Activated T-helper 2 cell treated with anti-CD3 and anti-CD28 coated beads, Interferon-gamma antibody, Interleukin-2, Interleukin-4, amounts not matched to agents 10 μg/mL and 5 μg/mL and 100 μg/mL, durations not matched to agents 14 hours and 24 hours and 36 hours (primary cell): ENCODE measurements at regions of chr11 and their contacts with region 1.

Region 1: DNA sequence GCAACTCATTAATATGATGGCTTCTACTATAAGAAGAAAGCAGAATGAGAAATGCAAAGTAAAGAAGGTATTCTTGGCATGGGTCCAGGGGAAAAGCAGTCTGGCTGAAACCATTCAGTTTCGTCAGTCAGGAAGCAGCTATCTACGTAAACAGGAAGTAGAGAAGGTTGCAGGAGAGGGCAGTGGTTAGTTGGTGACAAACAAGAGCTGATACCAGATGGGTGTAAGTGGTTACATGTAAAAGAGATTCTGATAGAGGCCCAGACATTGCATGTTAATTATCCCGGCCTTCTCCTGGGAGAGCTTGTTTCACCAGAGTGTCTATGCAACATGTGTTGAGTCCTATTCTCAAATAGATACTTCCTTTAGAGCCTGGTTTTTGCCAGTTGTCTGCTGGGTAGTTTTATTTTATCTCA is 58.4 kb upstream of the PSMA1 start:
- DNase-seq: peak; percentile 71
- H3K4me3 Mint-ChIP-seq: peak overlapping the region; percentile 42
- H3K27ac Mint-ChIP-seq: peak overlapping the region; percentile 87
- H3K4me1 Mint-ChIP-seq: peaks cover 45% of the 10 kb centered on the region
- H3K27me3 Mint-ChIP-seq: no peaks in the 10 kb centered on the region

Region 2: GRCh38 chr11:14519917-14520746 is 58.4 kb before region 1 on chr11 and contains the start of gene PSMA1:
- intact Hi-C with region 1: loop called (anchors 1 kb)
- DNase-seq: peak; percentile 92
- H3K4me3 Mint-ChIP-seq: peak within 1 kb of the TSS; percentile 90
- H3K27ac Mint-ChIP-seq: peak within 1 kb of the TSS; percentile 89
- H3K4me1 Mint-ChIP-seq: peaks cover 27% of the 10 kb centered on the region
- H3K27me3 Mint-ChIP-seq: no peaks in the 10 kb centered on the region
- total RNA-seq, gene PSMA1: 319 and 329 TPM in 2 replicates

Region 3: DNA sequence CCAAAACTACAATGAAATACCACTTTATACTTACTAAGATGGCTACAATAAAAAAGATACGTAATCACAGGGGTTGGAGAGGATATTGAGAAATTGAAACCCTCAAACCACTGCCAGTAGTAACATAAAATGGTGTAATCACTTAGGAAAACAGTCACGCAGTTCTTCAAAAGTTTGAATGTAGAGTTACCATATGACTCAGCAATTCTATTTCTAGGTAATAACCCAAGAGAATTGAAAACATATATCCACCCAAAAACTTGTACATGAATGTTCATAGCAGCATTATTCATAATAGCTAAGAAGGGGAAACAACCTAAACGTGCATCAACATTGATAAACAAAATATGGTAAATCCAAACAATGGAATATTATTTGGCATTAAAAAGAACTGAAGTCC is 33.9 kb before region 1 on chr11:
- intact Hi-C with region 1: loop called (anchors 1 kb)
- DNase-seq: no peak
- H3K4me3 Mint-ChIP-seq: no peak overlapping the region
- H3K27ac Mint-ChIP-seq: peak overlapping the region; percentile 80
- H3K4me1 Mint-ChIP-seq: peaks cover 42% of the 10 kb centered on the region
- H3K27me3 Mint-ChIP-seq: no peaks in the 10 kb centered on the region

Region 4: DNA sequence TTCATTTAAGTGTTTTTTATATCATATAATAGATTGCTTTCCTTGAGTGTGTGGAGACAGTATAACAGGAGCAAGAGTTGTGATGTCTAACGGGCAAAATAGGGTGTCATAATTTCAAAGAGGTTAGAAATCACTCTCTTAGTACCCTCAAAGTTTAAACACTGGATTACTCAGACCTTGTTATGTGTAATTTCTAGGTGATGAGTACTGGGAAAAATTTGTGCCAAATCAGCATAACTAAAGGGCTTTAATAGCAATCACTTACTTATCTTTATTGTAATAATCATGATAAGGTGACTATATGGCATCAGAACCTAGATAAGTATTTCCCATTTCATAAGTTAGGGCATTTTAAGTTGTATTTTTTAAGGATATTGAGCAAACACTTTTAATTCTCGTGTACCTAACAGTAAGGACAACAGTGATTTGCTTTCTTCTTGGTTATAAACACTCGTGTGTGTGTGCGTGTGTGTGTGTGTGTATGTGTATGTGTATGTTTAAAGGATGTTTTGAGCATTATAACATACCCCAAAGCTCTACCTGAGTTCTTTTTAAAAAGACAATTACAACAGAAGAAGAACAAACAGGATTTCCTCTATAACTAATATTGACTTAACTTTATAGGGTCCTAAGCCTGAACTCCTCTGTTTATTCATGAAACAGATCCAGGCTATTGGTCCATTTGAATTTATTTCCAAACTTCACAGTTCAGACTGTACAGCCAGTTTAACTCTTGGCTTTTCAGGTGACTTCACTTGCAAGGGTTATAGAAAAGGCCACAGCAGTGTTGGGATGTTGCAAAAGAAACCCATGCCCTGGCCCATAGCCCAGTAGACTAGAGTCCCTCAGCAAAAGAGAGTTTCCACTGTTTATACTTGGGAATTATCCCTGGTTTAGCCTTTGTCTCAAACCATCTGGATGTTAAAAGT is 41.3 kb after region 1 on chr11:
- intact Hi-C with region 1: no loop called
- DNase-seq: no peak
- H3K4me3 Mint-ChIP-seq: no peak overlapping the region
- H3K27ac Mint-ChIP-seq: no peak overlapping the region
- H3K4me1 Mint-ChIP-seq: peaks cover 26% of the 10 kb centered on the region
- H3K27me3 Mint-ChIP-seq: no peaks in the 10 kb centered on the region

Region 5: DNA sequence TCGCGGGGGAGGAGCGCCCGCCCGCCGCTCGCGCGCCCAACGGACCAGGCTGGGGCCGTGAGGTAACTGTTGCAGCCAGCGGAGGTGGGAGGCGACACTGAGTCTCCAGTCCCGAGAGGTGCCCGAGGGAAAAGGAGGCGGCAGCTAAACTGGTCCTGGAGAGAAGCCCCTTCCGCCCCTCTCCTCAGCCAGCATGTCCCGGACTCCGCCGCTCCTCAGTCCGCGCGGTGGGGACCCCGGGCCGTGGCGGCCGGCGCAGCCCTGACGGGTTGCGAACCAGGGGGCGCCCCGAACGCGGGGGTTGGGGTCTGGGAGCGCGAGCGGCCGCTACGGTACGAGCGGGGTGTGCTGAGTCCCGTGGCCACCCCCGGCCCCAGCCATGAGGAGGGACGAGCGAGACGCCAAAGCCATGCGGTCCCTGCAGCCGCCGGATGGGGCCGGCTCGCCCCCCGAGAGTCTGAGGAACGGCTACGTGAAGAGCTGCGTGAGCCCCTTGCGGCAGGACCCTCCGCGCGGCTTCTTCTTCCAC is 65.2 kb after region 1 on chr11 and contains the start of gene PDE3B:
- intact Hi-C with region 1: loop called (anchors 1 kb)
- DNase-seq: peak; percentile 75
- H3K4me3 Mint-ChIP-seq: peak within 1 kb of the TSS; percentile 93
- H3K27ac Mint-ChIP-seq: peak within 1 kb of the TSS; percentile 87
- H3K4me1 Mint-ChIP-seq: peaks cover 46% of the 10 kb centered on the region
- H3K27me3 Mint-ChIP-seq: no peaks in the 10 kb centered on the region
- total RNA-seq, gene PDE3B: 58.8 and 62.1 TPM in 2 replicates